ENCODE measurements at regions of chr16 and their contacts with region 1.

Region 1: DNA sequence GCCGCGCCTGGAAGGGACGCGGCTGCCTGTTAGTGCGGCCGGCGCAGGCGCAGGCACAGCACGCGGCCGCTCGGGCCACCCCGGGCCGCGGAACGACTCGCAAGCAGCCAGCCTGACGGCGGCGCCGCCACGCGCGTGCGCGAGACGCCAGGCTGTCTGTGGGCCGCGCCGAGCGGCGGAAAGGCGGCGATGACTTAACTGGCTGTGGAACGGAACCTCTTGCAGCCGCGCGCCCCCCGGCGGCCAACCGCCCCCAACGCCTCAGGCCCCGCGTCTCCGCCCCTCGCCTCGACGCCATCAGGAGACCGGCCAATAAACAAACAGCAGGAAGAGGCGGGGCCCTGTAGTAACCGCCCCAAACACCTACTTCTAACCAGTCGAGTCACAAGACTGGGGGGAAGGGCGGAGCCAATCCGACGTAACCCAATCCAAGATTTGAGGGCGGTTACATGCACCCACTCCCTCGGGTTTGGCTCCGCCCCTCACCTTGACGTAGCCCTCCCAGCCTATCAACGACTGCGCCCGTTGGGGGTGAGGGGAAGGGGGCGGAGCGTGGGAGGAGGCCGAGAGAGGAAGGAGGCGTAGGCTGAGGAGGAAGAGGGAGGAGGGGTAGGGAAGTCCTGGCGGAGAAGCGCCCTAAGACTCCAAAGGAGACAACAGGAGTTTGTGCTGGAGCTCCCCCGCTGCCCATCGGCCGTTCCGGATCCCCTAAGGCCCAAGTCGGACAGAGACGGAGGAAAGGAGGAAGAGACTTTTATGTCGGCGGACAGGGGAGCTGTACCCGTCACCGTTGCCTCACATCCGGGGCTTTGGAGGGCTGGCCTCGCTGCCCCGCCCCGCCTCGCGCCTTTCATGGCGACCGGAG is at the start of gene FBRS:
- DNase-seq: peak; percentile 100
- H3K4me3 ChIP-seq: peak within 1 kb of the TSS; percentile 89 to 96
- H3K27ac ChIP-seq: peak within 1 kb of the TSS; percentile 98 to 99
- H3K4me1 ChIP-seq: peaks cover 26 to 34% of the 10 kb centered on the region in 2 donors
- H3K27me3 ChIP-seq: no peaks in the 10 kb centered on the region
- CTCF ChIP-seq: peak; percentile 74 to 80 (median 80)
- total RNA-seq, gene FBRS: 26.8 TPM

Region 2: DNA sequence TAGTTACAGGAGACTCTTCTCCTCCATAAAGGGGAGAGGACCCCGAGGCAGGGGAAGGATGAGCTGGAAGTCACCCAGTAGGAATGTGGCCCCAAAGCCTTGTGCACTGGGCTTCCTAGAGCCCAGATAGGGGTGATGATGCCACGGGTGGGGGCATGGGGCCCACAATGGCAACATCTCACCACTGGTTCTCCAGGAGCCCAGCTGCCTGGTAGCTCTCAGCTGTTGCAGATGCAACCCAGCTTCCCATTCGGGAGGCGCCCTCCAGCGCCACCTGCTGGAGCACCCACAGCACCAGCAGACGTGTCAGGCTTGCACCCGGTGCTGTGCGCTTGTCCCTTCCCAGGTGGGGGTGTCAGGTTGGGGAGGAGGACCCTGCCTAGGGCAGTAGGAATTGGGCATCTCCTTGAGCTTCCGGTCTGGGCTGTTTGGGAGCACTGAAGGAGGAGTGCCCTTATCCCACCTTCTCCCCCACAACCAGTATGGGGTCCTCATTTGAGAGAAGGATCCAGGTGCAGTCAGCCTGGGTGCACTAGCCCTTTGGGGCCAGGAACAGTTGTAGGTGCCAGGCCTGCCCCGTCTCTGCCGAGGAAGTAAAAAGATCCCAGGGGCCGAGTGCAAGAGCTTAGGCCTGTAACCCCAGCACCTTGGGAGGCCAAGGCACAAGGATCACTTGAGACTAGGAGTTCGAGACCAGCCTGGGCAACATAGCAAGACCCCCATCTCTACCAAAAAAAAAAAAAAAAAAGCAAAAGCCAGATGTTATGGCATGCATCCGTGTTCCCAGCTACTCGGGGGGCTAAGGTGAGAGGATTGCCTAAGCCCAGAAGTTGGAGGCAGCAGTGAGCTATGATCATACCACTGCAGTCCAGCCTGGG is 809.4 kb before region 1 on chr16:
- intact Hi-C with region 1: no loop called
- DNase-seq: peak in 1 of 2 donors; percentile 84
- H3K4me3 ChIP-seq: no peak overlapping the region
- H3K27ac ChIP-seq: no peak overlapping the region
- H3K4me1 ChIP-seq: no peaks in the 10 kb centered on the region
- H3K27me3 ChIP-seq: no peaks in the 10 kb centered on the region
- CTCF ChIP-seq: peak; percentile 75 to 92 (median 82)

Region 3: DNA sequence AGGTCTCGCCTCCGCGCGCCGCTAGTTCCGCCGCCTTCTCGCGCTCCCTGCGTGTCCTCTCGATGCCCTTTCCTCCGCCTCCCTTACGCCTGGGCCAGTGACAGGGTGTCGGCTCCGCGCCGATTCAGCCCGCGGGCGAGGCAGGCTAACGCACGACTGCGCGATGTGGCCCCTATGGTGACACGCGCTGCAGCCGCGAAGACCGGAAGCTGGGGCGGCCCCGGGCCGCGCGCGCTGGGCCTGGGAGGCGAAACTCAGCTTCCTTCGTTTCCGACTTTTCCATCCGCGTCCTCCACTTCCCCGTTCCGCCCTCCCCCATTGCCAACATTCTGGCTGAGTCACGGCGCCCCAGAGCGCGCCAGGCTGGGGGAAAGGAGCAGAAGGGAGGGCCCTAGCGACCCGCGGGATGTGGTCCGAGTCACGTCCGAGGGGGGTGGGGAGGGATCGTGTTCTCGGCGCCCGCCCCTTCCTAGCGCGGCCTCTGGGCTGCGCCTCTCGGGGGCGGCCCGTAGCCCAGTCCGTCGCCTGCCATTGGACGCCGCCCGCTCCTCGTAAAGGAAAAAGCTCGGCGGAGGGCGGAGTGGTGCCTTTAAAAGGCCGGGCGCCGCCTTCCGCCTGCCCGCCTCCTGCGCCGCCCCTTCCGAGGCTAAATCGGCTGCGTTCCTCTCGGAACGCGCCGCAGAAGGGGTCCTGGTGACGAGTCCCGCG is 592.8 kb before region 1 on chr16 and contains the start of gene ALDOA:
- intact Hi-C with region 1: loop called (anchors 10 kb)
- DNase-seq: peak; percentile 93 to 99
- H3K4me3 ChIP-seq: peak within 1 kb of the TSS; percentile 92
- H3K27ac ChIP-seq: peak within 1 kb of the TSS; percentile 97 to 99
- H3K4me1 ChIP-seq: peaks cover 22 to 51% of the 10 kb centered on the region in 2 donors
- H3K27me3 ChIP-seq: no peaks in the 10 kb centered on the region
- CTCF ChIP-seq: no peak
- total RNA-seq, gene ALDOA: 1,202 TPM

Region 4: DNA sequence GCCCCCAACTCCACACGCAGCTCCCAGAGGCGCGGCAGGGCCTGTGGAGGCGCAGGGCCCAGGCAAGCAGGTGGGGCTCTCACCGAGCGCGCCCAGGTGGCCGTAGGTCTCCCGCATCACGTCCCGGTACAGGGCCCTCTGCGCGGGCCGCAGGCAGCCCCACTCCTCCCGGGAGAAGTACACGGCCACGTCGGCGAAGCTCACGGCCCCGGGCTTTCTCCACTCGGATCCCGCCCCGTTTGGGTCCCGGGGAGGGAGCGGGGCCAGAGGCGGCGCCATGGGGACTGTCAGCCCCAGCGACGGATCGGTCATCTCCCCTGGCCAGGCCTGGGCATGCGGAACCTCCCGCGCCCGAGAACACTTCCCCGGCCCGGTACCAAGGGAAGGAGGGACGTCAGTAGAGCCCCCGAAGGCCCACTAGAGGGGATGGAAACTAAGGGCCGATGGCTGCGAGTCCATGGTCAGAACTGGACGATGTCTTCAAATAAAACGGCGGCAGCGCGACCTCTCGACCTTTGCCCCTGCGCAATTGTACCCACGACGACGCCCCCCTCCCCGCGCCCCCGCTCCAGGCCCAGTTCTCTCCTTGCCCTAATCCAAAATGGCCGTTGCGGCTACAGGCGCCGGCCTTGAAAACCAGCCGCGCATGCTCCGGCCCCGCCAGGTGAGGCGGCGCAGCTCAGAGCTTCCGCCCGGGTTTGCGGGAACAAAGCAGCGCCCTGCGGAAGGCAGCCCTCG is 123.6 kb before region 1 on chr16 and contains the start of gene ZNF747:
- intact Hi-C with region 1: loop called (anchors 2 kb)
- DNase-seq: peak; percentile 61 to 95
- H3K4me3 ChIP-seq: peak within 1 kb of the TSS; percentile 69 to 93
- H3K27ac ChIP-seq: peak within 1 kb of the TSS; percentile 86 to 96
- H3K4me1 ChIP-seq: peaks cover 11 to 12% of the 10 kb centered on the region in 2 donors
- H3K27me3 ChIP-seq: no peaks in the 10 kb centered on the region
- CTCF ChIP-seq: peak in 1 of 3 experiments; percentile 8
- total RNA-seq, gene ZNF747: 19.6 TPM

Region 5: GRCh38 chr16:30585400-30586189 is 72.5 kb before region 1 on chr16 and contains the start of gene ZNF785:
- intact Hi-C with region 1: loop called (anchors 2 kb)
- DNase-seq: peak; percentile 97 to 99
- H3K4me3 ChIP-seq: peak within 1 kb of the TSS; percentile 82 to 90
- H3K27ac ChIP-seq: peak within 1 kb of the TSS; percentile 92 to 93
- H3K4me1 ChIP-seq: peaks cover 0 to 16% of the 10 kb centered on the region in 2 donors
- H3K27me3 ChIP-seq: no peaks in the 10 kb centered on the region
- CTCF ChIP-seq: peak in 2 of 3 experiments; percentile 17 to 23
- total RNA-seq, gene ZNF785: 12.1 TPM

Region 6: DNA sequence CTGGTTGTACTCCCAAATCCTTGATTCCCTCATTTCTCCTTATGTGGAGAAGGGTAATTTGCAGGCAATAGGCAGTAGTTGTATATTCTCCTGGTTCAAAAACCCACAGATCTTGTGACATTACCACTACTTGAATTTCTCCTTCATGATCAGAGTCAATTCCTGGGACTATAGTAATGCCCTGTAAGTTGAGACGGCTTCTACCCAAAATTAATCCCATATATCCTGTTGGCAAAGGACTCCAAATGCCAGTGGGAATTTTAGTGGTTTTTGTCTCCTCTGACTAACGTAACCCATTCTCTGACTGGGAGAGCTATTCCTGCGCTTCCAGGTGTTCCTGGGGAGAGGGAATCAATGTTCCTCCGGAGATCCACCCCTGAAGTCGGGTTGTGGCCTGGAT is 36.3 kb before region 1 on chr16:
- intact Hi-C with region 1: no loop called
- DNase-seq: no peak
- H3K4me3 ChIP-seq: no peak overlapping the region
- H3K27ac ChIP-seq: no peak overlapping the region
- H3K4me1 ChIP-seq: no peaks in the 10 kb centered on the region
- H3K27me3 ChIP-seq: no peaks in the 10 kb centered on the region
- CTCF ChIP-seq: no peak

Region 7: GRCh38 chr16:30698139-30698815 is 40.2 kb after region 1 on chr16:
- intact Hi-C with region 1: loop called (anchors 1 kb)
- DNase-seq: peak; percentile 94 to 99
- H3K4me3 ChIP-seq: peak overlapping the region; percentile 89 to 90
- H3K27ac ChIP-seq: peak overlapping the region; percentile 97 to 100
- H3K4me1 ChIP-seq: peaks cover 8 to 16% of the 10 kb centered on the region in 2 donors
- H3K27me3 ChIP-seq: no peaks in the 10 kb centered on the region
- CTCF ChIP-seq: no peak

Region 8: GRCh38 chr16:30922960-30923535 is 264.9 kb after region 1 on chr16:
- intact Hi-C with region 1: loop called (anchors 1 kb)
- DNase-seq: peak; percentile 99 to 100
- H3K4me3 ChIP-seq: peak overlapping the region; percentile 71 to 82
- H3K27ac ChIP-seq: peak overlapping the region; percentile 95 to 97
- H3K4me1 ChIP-seq: peaks cover 3 to 4% of the 10 kb centered on the region in 2 donors
- H3K27me3 ChIP-seq: no peaks in the 10 kb centered on the region
- CTCF ChIP-seq: no peak

Measured in ascending aorta (tissue), 2 donors.